ENCODE measurements at regions of chr14 and their contacts with region 1.

Region 1: GRCh38 chr14:96285667-96286066 is 29.7 kb downstream of the BDKRB1 start:
- DNase-seq: no peak
- CTCF ChIP-seq: no peak

Region 2: GRCh38 chr14:96225745-96226151 is 59.9 kb before region 1 on chr14:
- CTCF ChIA-PET with region 1: no interaction called
- POLR2A ChIA-PET with region 1: no interaction called
- DNase-seq: no peak
- CTCF ChIP-seq: no peak

Region 3: DNA sequence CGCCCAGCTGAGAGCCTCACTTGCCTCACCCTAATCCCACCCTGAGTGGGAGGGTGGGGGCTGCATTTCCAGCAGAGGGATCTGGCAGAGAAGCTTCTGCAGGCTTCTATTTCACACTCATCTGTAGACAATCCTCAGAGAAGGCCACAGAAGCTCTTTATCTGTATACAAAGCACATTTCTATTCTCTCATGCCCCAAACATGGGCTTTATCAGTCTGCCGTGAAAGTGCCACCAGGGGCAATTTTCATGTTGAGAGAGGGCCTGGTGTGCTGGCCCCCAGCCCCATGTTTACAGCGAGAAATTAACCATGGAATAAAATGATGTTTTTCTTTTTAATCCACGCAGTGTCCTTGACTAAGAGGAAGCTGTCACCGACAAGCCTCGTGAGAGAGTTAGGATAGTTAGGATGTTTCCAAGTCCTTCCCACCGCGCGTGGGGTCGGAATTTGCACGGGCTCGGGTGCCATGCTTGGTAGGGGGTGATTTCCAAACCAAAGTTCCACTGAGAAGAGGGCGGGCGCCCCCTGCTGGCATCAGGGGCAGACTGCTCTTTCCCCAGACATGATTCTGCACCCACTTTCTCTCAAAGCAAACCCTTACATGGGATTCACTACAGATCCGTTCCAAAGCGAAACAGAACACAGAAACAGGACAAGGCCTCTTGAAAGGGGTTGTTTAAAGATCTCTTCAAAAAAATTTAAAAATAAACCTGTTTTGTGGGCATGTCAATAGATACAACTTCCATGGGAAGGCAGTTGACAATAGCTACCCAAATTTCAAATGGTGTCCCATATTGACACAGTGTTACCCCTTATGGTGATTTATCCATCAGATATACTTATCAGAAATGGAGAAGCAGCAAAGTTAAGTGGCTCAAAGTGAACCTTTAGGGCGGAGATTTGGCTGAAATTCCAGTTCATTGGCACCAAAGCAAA is 10.2 kb before region 1 on chr14:
- CTCF ChIA-PET with region 1: interaction called, 32 read pairs
- POLR2A ChIA-PET with region 1: no interaction called
- DNase-seq: peak; percentile 82
- CTCF ChIP-seq: peak; percentile 81

Region 4: GRCh38 chr14:96297000-96297399 is 11.3 kb after region 1 on chr14:
- CTCF ChIA-PET with region 1: interaction called, 16 read pairs
- POLR2A ChIA-PET with region 1: no interaction called
- DNase-seq: peak; percentile 26
- CTCF ChIP-seq: peak; percentile 23